ENCODE measurements at regions of chr3 and their contacts with region 1.

Region 1: DNA sequence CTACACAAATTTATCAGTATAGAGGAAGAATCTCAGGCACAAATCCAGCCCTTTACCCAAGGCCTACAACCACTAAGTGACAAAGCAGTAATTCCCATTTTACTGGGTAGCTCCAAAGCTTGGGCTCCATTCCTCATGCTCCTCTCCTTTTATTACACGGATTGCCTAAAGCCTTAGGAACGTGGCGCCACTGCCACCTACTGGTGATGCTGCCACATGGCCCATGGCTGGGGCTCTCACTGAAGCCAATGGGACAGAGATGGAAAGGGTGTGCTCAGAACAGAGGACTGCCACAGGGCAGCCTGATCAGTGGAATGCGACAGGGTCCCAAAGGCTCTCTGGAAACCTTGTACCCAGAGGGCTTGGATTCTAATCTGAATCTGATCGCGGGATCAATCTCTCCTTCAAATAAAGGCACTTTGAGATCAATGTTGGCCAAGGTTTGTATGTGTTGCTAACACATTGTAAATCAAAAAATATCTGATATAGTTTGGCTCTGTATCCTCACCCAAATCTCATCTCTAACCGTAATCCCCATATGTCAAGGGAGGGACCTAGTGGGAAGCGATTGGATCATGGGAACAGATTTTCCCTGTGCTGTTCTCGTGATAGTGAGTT is 33.5 kb upstream of the LYZL4 start:
- DNase-seq: peak; percentile 52 to 93 (median 80)
- ATAC-seq: peak; percentile 99
- H3K4me3 ChIP-seq: no peak overlapping the region
- H3K27ac ChIP-seq: no peak overlapping the region
- H3K4me1 ChIP-seq: no peaks in the 10 kb centered on the region
- H3K27me3 ChIP-seq: peaks cover 0 to 6% of the 10 kb centered on the region in 2 donors
- CTCF ChIP-seq: peak; percentile 95 to 99

Region 2: DNA sequence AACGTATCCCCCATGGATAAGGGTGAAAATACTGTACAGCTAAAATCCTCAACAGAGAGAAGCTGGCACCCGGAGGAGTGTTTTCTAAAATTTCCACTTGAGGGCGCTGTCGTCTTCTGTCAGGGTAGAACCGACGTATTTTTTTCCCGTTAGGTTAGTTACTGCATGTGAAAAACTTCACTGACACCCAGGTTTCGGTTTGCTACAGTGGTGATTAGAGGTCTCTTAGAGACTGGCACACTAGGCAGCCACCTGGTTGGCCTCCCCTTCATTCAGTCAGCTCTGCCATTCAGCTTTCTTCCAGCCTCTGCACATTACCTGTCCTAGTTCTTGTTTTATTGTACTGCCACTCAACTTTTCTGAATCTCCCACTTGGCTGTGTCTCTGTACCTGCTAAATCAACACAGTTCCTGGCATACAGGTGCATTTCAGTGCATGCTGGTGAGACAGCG is 196.3 kb before region 1 on chr3:
- intact Hi-C with region 1: loop called in 1 of 2 experiments (anchors 5 kb)
- DNase-seq: peak in 1 of 4 donors; percentile 47
- ATAC-seq: peak; percentile 95
- H3K4me3 ChIP-seq: no peak overlapping the region
- H3K27ac ChIP-seq: no peak overlapping the region
- H3K4me1 ChIP-seq: no peaks in the 10 kb centered on the region
- H3K27me3 ChIP-seq: peaks cover 0 to 15% of the 10 kb centered on the region in 2 donors
- CTCF ChIP-seq: peak; percentile 61 to 69